ENCODE measurements at regions of chr17 and their contacts with region 1.

Region 1: GRCh38 chr17:48153691-48154358 is 46.3 kb downstream of the SNX11 start:
- DNase-seq: peak; percentile 52
- H3K4me3 ChIP-seq: no peak overlapping the region
- H3K27ac ChIP-seq: no peak overlapping the region
- H3K4me1 ChIP-seq: no peaks in the 10 kb centered on the region
- H3K27me3 ChIP-seq: peaks cover 26 to 36% of the 10 kb centered on the region in 2 experiments
- CTCF ChIP-seq: peak; percentile 31 to 38
- POLR2A ChIP-seq: no peak

Region 2: DNA sequence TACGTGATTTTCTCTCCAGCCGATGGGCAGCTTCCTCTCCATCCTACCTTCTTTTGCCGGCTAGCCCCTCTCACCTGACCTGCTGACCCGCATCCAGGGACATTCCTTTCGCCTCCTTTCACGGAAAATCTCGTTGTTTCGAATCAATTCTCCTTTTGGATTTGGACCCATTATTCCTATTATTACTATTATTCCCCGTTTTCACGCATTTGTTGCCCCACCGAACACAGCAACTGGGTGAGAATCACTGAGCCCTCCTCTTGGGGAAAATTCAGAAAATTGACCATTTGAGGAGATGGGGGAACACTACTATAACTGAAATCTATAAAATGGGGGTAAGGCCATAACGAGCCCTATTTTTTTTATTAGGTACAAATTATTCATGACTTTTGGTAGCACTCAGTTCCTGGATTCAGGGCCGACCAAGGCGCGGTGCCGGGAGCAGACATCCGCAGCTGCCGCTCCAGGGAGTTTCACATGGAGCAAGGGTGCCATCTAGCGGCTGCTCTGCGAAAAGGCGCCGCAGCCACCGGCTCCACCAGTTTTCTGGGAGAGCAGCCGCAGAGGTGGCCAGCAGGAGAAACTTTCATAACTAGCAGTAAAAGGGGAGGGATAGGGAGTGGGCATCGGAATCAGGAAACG is 464.6 kb after region 1 on chr17:
- CTCF ChIA-PET with region 1: interaction called, 6 read pairs
- POLR2A ChIA-PET with region 1: no interaction called
- dilution Hi-C with region 1: no loop called
- intact Hi-C with region 1: loop called (anchors 5 kb)
- DNase-seq: peak; percentile 83
- H3K4me3 ChIP-seq: peak overlapping the region; percentile 3 to 46 (median 30)
- H3K27ac ChIP-seq: no peak overlapping the region
- H3K4me1 ChIP-seq: peaks cover 27% of the 10 kb centered on the region
- H3K27me3 ChIP-seq: peaks cover 66 to 79% of the 10 kb centered on the region in 2 experiments
- CTCF ChIP-seq: peak; percentile 91 to 99
- POLR2A ChIP-seq: no peak